Breast epithelium (tissue), 4 donors: ENCODE measurements at regions of chr3 and their contacts with region 1.

Region 1: GRCh38 chr3:187679638-187680396 is 9.6 kb upstream of the SST start:
- DNase-seq: peak; percentile 57 to 74
- H3K4me3 ChIP-seq: no peak overlapping the region
- H3K27ac ChIP-seq: no peak overlapping the region
- H3K4me1 ChIP-seq: no peaks in the 10 kb centered on the region
- H3K27me3 ChIP-seq: no peaks in the 10 kb centered on the region
- CTCF ChIP-seq: peak; percentile 88 to 92 (median 90)
- POLR2A ChIP-seq: no peak

Region 2: GRCh38 chr3:186320862-186321568 is 1358.8 kb before region 1 on chr3:
- intact Hi-C with region 1: no loop called
- DNase-seq: no peak
- H3K4me3 ChIP-seq: no peak overlapping the region
- H3K27ac ChIP-seq: no peak overlapping the region
- H3K4me1 ChIP-seq: no peaks in the 10 kb centered on the region
- H3K27me3 ChIP-seq: no peaks in the 10 kb centered on the region
- CTCF ChIP-seq: no peak
- POLR2A ChIP-seq: no peak

Region 3: GRCh38 chr3:186483611-186484340 is 1196.0 kb before region 1 on chr3:
- intact Hi-C with region 1: no loop called
- DNase-seq: no peak
- H3K4me3 ChIP-seq: no peak overlapping the region
- H3K27ac ChIP-seq: no peak overlapping the region
- H3K4me1 ChIP-seq: no peaks in the 10 kb centered on the region
- H3K27me3 ChIP-seq: no peaks in the 10 kb centered on the region
- CTCF ChIP-seq: no peak
- POLR2A ChIP-seq: no peak

Region 4: DNA sequence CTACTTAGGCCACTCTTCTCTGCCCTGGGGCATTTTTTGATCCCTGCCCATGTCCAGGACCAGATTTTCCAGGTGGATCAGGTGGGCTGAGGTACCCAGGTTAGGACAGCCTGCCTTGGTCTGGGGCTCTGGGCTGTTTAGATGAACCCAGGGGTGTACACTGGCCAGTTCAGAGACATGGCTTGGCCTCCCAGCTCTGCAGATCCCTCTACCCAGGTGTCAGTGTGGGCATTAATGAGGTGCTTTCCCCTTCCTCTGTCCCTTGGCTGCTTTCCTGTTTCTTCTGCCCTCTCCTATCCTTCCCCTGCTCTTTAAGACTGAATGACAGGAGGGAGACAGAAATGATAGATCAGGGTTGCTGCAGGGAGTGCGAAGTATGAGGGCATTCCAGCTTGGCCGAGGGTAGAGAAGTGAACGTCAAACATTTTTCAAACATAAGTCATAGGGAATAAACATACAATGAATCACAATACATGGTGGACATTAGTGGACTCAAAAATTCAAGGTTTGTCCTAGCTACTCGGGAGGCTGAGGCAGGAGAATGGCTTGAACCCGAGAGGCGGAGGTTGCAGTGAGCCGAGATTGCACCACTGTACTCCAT is 452.1 kb before region 1 on chr3:
- intact Hi-C with region 1: loop called (anchors 10 kb)
- DNase-seq: no peak
- H3K4me3 ChIP-seq: no peak overlapping the region
- H3K27ac ChIP-seq: no peak overlapping the region
- H3K4me1 ChIP-seq: no peaks in the 10 kb centered on the region
- H3K27me3 ChIP-seq: no peaks in the 10 kb centered on the region
- CTCF ChIP-seq: no peak
- POLR2A ChIP-seq: no peak

Region 5: DNA sequence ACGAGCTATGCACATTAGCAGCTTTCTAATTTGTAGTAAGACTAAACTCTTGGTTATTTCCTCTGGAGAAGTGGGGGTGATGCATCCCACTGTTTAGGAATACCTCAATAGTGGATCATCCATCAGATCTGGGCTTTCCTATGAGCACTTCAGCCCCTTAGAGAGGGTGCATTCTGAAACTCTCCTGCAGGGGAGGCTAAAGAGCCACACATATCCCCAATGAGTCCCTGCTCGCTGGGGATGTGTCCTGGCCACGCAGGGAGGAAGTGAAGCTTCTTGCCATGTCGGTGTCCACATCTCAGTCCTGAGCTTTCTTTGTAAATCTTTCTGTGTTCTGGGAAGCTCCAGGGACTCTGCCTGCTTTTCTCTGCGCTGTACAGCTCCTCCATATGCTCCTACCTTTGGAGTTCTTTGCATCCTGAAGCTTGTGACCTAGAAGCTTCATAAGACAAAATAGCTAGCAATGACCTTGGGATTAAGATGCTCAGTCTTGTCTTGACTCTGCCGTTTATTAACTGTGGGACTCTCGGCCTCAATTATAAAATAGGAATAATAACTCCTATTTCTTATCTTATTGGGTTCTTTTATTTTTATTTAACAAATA is 360.0 kb before region 1 on chr3:
- intact Hi-C with region 1: loop called (anchors 10 kb)
- DNase-seq: peak in 1 of 2 donors; percentile 60
- H3K4me3 ChIP-seq: no peak overlapping the region
- H3K27ac ChIP-seq: no peak overlapping the region
- H3K4me1 ChIP-seq: no peaks in the 10 kb centered on the region
- H3K27me3 ChIP-seq: no peaks in the 10 kb centered on the region
- CTCF ChIP-seq: peak; percentile 72 to 95 (median 87)
- POLR2A ChIP-seq: no peak

Region 6: GRCh38 chr3:187610981-187611511 is 68.8 kb before region 1 on chr3:
- intact Hi-C with region 1: loop called (anchors 2 kb)
- DNase-seq: peak in 1 of 2 donors; percentile 22
- H3K4me3 ChIP-seq: no peak overlapping the region
- H3K27ac ChIP-seq: peak overlapping the region; percentile 26 to 87
- H3K4me1 ChIP-seq: peaks cover 0 to 4% of the 10 kb centered on the region in 2 donors
- H3K27me3 ChIP-seq: no peaks in the 10 kb centered on the region
- CTCF ChIP-seq: no peak
- POLR2A ChIP-seq: no peak

Region 7: DNA sequence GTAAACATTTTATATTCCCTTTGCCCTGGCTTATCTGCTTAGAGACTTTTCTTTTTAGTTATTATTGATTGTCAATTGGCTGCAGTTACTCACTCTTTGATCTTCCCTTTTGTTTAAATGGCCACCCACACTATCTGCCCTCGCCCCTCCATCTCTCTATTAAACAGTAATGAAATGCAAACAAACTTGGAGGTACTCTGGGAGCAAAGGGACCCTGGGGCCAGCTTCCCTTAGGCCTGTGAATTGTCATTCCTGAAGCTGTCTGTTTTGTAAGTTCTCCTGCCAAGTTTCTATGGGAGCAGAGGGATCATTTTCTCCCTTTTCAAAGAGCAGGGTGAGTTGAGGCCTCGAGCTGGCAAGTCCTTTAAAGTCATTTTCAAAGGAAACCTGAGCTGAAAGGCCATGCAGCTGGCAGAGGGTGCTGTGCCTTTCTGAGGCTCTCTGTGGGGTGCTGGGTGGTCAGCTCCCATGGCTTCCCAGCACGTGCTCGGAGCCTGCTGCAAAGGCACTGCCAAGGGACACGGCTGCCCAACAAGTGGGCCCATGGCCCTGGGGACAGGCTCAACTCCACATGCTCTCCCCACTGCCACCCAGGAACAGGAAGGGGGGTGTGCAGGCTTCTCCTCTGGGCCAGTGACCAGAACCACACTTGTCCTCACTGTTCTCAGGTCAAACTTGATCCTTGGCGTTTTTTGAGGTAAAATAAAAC is 40.0 kb after region 1 on chr3:
- intact Hi-C with region 1: no loop called
- DNase-seq: no peak
- H3K4me3 ChIP-seq: no peak overlapping the region
- H3K27ac ChIP-seq: peak overlapping the region; percentile 15 to 26
- H3K4me1 ChIP-seq: no peaks in the 10 kb centered on the region
- H3K27me3 ChIP-seq: no peaks in the 10 kb centered on the region
- CTCF ChIP-seq: no peak
- POLR2A ChIP-seq: no peak